Endothelial cell of umbilical vein (primary cell): ENCODE measurements at regions of chr20 and their contacts with region 1.

Region 1: GRCh38 chr20:8853805-8854338 is 215.0 kb upstream of the PLCB4 start:
- DNase-seq: peak; percentile 90
- H3K4me3 ChIP-seq: no peak overlapping the region
- H3K27ac ChIP-seq: no peak overlapping the region
- H3K4me1 ChIP-seq: peaks cover 13% of the 10 kb centered on the region
- H3K27me3 ChIP-seq: no peaks in the 10 kb centered on the region
- CTCF ChIP-seq: peak; percentile 68 to 73
- POLR2A ChIP-seq: no peak

Region 2: DNA sequence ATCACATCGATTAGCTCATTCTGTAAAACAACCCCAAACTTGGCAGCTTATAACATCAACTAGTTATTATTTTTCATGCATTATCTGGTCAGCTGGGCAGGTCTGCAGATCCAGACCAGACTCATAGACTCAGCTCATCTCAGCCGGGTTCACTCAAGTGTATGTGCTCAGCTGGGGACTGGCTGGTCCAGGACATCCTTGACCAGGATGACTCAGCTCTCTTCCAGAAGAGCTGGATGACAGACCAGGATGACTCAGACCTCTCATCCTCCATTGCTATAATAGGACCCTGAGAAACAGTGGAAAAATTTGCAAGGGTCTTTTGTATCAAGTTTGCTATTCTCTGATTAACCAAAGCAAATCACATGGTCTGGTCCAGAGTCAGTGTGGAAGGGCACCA is 97.5 kb before region 1 on chr20:
- CTCF ChIA-PET with region 1: interaction called, 12 read pairs
- POLR2A ChIA-PET with region 1: no interaction called
- dilution Hi-C with region 1: no loop called
- intact Hi-C with region 1: no loop called
- DNase-seq: peak; percentile 62
- H3K4me3 ChIP-seq: no peak overlapping the region
- H3K27ac ChIP-seq: no peak overlapping the region
- H3K4me1 ChIP-seq: peaks cover 6% of the 10 kb centered on the region
- H3K27me3 ChIP-seq: no peaks in the 10 kb centered on the region
- CTCF ChIP-seq: no peak
- POLR2A ChIP-seq: no peak

Region 3: DNA sequence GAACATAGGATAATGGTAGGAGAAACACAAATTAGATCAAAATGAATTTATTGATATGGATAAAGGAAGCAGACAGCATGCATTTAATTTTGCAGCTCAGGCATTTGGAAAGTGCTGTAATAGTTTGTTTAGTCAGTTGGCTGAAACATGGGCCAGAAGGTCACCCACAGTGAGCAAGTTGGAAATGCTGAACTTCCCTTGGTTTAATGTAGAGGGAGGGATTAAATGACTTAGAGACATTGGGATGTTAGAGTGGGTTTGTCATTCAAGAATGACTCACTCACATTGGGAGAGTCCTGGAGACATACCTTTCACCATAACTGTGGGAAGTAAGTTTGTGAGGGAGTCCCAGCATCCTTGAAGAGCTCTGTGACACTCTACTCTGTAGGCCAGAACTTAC is 16.5 kb before region 1 on chr20:
- CTCF ChIA-PET with region 1: interaction called, 33 read pairs
- POLR2A ChIA-PET with region 1: no interaction called
- dilution Hi-C with region 1: no loop called
- intact Hi-C with region 1: no loop called
- DNase-seq: no peak
- H3K4me3 ChIP-seq: no peak overlapping the region
- H3K27ac ChIP-seq: no peak overlapping the region
- H3K4me1 ChIP-seq: no peaks in the 10 kb centered on the region
- H3K27me3 ChIP-seq: no peaks in the 10 kb centered on the region
- CTCF ChIP-seq: no peak
- POLR2A ChIP-seq: no peak

Region 4: DNA sequence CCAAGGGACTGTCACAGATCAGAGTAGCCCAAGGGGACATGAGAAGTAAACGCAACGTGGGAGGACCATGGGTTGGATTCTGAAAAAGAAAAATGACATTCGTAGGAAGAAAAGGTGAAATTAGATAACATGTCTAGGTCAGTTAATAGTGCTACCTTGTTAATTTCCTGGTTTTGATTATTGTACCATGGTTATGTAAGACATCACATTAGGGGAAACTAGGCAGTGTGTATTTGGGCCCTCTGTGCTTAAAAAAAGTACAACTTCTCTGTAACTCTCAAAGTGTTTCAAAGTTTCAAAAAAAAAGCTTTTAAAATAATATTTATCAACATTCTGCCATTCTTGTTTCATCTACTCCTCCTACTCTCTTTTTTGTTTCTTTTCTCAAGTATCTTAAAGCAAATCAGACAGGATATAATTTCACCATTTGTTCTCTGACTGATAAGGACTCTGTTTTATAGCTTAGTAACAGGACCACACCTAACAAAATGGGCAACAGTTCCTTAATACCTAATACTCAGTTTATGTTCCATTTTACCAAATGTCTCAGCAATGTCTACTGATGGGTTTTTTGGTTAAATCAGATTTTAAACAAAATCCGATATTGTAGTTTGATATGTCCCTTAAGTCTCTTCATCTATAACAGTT is 117.9 kb after region 1 on chr20:
- CTCF ChIA-PET with region 1: interaction called, 10 read pairs
- POLR2A ChIA-PET with region 1: no interaction called
- dilution Hi-C with region 1: no loop called
- intact Hi-C with region 1: no loop called
- DNase-seq: peak; percentile 40
- H3K4me3 ChIP-seq: no peak overlapping the region
- H3K27ac ChIP-seq: no peak overlapping the region
- H3K4me1 ChIP-seq: no peaks in the 10 kb centered on the region
- H3K27me3 ChIP-seq: no peaks in the 10 kb centered on the region
- CTCF ChIP-seq: no peak
- POLR2A ChIP-seq: no peak

Region 5: GRCh38 chr20:9068851-9069663 is 215.2 kb after region 1 on chr20 and contains the start of gene PLCB4:
- CTCF ChIA-PET with region 1: interaction called, 20 read pairs
- POLR2A ChIA-PET with region 1: no interaction called
- dilution Hi-C with region 1: no loop called
- intact Hi-C with region 1: loop called (anchors 5 kb)
- DNase-seq: peak; percentile 46
- H3K4me3 ChIP-seq: peak within 1 kb of the TSS; percentile 42 to 81 (median 69)
- H3K27ac ChIP-seq: no peak within 1 kb of the TSS
- H3K4me1 ChIP-seq: no peaks in the 10 kb centered on the region
- H3K27me3 ChIP-seq: peaks cover 0 to 5% of the 10 kb centered on the region in 2 experiments
- CTCF ChIP-seq: no peak
- POLR2A ChIP-seq: no peak
- total RNA-seq, gene PLCB4: 1.6 and 1.7 TPM in 2 replicates

Region 6: DNA sequence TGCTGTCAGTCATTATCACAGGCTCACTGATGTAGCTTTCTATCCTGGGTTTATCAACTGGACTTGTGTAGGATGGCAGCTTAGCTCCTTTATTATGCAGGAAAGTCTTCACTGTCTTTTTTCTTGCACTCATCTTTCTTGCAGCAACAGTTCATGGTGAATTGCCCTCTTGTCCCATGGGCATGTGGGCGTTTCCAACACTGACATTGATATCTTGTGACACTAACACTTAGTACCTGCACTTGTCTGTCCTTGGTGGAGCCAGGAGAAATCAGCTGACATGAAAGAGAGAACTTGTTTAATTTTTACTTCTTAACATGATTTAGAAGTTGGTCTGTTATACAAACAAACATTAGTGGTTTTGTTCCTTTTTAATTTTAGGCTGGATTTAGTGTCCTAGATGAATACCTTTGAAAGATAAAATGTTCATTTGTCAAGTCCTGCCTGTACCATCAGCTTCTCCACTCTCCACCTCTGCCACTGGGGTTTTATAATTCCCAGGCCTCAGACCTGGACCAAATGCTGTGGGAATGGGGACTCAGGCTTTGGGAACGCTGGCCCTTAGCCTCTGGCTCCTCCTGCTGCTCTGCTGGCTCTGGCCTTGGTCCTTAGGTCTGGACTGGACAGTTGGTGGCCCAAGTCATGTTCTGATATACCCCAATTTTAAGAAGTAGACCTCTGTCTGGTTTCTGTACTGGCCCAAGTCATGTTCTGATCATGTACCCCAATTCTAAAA is 499.5 kb after region 1 on chr20:
- CTCF ChIA-PET with region 1: interaction called, 45 read pairs
- POLR2A ChIA-PET with region 1: no interaction called
- dilution Hi-C with region 1: no loop called
- intact Hi-C with region 1: no loop called
- DNase-seq: no peak
- H3K4me3 ChIP-seq: no peak overlapping the region
- H3K27ac ChIP-seq: no peak overlapping the region
- H3K4me1 ChIP-seq: peaks cover 7% of the 10 kb centered on the region
- H3K27me3 ChIP-seq: no peaks in the 10 kb centered on the region
- CTCF ChIP-seq: no peak
- POLR2A ChIP-seq: no peak